ENCODE measurements at regions of chr6 and their contacts with region 1.

Region 1: DNA sequence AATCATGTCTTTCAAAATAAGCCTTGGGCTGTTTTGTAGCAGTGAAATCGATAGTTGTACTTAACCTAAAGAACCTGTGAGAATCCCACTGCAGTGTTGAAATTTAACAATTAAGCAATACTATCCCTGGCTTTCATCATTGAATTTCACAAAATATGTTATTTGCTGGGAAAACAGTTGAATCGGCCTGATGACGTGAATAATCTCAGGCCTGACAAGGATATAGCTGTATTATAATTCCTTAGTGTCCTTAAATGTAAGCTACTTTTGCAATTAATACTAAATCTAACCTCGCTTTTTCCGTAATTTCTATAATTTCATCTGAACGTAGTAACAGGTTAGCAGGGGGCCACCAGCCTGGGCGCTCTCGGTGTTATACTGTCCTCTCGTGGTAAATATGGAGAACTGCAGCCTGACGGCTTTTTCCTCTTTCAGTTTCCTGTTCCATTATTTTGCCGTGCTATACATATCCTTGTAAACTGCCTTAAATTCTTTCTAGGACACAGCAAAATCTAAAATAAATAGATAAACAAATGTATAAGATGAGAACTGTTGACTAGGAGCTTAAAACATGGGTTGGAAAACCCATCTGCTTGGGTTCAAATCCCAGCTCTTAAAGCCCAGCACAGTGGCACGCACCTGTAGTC is 24.0 kb downstream of the MTFR2 start:
- DNase-seq: peak; percentile 61
- H3K4me3 ChIP-seq: peak overlapping the region; percentile 7
- H3K27ac ChIP-seq: no peak overlapping the region
- H3K4me1 ChIP-seq: peaks cover 4% of the 10 kb centered on the region
- H3K27me3 ChIP-seq: no peaks in the 10 kb centered on the region
- CTCF ChIP-seq: peak; percentile 99

Region 2: DNA sequence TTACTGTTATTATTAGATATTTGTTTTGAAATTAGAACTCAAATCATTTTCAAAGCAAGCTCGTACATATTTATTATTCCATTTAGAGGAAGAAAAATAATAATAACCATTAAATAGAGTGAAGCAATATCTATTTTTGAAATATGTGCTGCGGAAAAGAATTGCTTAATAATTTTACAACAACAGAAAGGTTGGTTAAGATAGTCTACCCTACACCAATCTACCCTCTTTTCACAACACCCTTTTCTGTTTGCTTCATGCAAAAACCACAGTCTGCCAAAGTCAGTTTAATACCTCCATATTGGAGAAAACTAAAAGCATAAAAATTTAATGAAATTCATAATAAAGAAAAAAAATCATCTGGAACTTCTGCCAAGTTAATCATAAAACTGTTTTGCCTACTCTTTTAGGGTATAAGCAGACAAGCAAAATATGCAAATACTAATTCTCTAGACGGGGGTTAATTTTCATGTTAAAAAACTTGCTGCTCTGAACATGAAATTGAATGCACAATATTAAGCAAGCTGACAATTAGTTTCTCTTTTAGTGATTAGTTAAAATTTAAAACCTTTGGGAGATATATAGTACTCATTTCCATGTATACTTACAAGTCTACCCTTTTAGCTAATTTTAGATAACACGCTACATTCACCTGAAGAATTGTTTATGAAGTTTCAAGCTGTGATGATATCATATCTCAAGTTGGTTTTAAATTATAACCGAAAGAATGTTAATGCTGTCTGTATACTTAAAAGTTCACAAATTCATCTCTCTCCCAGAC is 828.8 kb before region 1 on chr6:
- CTCF ChIA-PET with region 1: no interaction called
- POLR2A ChIA-PET with region 1: no interaction called
- intact Hi-C with region 1: no loop called
- DNase-seq: no peak
- H3K4me3 ChIP-seq: no peak overlapping the region
- H3K27ac ChIP-seq: no peak overlapping the region
- H3K4me1 ChIP-seq: no peaks in the 10 kb centered on the region
- H3K27me3 ChIP-seq: no peaks in the 10 kb centered on the region
- CTCF ChIP-seq: no peak

Region 3: DNA sequence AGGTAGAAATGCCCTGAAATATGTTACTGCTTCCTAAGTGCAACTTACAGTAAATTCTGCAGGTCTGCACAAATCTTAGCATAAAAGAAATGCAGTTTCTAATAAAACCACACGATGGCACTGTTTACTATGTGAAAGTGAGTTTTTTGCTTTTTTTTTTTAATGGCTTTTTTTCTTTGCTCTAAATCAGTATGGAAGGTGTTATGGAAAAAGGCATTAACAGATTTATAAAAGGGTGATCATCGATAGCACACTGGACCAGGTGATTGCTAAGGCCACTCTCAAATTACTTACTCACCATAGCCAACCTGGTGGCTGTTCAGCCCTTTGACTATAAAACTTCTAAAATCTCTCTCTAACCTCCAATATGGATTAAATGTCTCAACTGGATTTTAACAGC is 774.5 kb before region 1 on chr6:
- CTCF ChIA-PET with region 1: no interaction called
- POLR2A ChIA-PET with region 1: no interaction called
- intact Hi-C with region 1: loop called (anchors 5 kb)
- DNase-seq: peak; percentile 64
- H3K4me3 ChIP-seq: no peak overlapping the region
- H3K27ac ChIP-seq: no peak overlapping the region
- H3K4me1 ChIP-seq: no peaks in the 10 kb centered on the region
- H3K27me3 ChIP-seq: no peaks in the 10 kb centered on the region
- CTCF ChIP-seq: peak; percentile 71

Region 4: GRCh38 chr6:135535989-135536414 is 690.1 kb before region 1 on chr6:
- CTCF ChIA-PET with region 1: interaction called, 4 read pairs
- POLR2A ChIA-PET with region 1: no interaction called
- intact Hi-C with region 1: loop called (anchors 2 kb)
- DNase-seq: peak; percentile 53
- H3K4me3 ChIP-seq: no peak overlapping the region
- H3K27ac ChIP-seq: no peak overlapping the region
- H3K4me1 ChIP-seq: no peaks in the 10 kb centered on the region
- H3K27me3 ChIP-seq: peaks cover 41% of the 10 kb centered on the region
- CTCF ChIP-seq: peak; percentile 78

Region 5: DNA sequence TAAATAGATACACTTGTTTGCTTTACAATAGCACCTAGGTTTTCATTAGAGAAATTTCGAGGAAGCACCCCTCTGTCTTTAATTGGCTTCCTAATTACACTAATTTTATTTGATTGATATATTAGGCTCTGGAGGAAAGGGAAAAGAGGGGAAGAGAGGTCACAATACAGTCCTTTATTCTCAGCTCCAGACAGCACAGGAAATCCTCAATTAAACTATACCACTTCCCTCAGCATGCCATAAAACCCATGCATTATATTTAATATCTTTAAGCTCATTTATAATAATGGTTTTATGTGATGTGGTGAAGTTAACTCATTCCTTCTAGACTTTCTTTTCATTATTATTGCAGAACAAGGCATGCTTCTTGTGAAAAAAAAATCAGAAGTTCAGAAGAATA is 392.4 kb before region 1 on chr6:
- CTCF ChIA-PET with region 1: no interaction called
- POLR2A ChIA-PET with region 1: no interaction called
- intact Hi-C with region 1: loop called (anchors 1 kb)
- DNase-seq: peak; percentile 93
- H3K4me3 ChIP-seq: no peak overlapping the region
- H3K27ac ChIP-seq: no peak overlapping the region
- H3K4me1 ChIP-seq: peaks cover 18% of the 10 kb centered on the region
- H3K27me3 ChIP-seq: peaks cover 94% of the 10 kb centered on the region
- CTCF ChIP-seq: no peak

Region 6: GRCh38 chr6:136031982-136032381 is 194.2 kb before region 1 on chr6:
- CTCF ChIA-PET with region 1: interaction called, 3 read pairs
- POLR2A ChIA-PET with region 1: no interaction called
- intact Hi-C with region 1: loop called (anchors 5 kb)
- DNase-seq: peak; percentile 51
- H3K4me3 ChIP-seq: no peak overlapping the region
- H3K27ac ChIP-seq: no peak overlapping the region
- H3K4me1 ChIP-seq: peaks cover 3% of the 10 kb centered on the region
- H3K27me3 ChIP-seq: no peaks in the 10 kb centered on the region
- CTCF ChIP-seq: peak; percentile 63

Measured in A673 (cell line).